Dendritic cell treated with granulocyte-macrophage colony-stimulating factor and Interleukin-4, amounts not matched to agents 40 ng/mL and 50 ng/mL, for 4 days (primary cell): ENCODE measurements at regions of chr12 and their contacts with region 1.

Region 1: GRCh38 chr12:79358716-79359300 is 332.0 kb downstream of the PAWR start:
- H3K4me3 Mint-ChIP-seq: no peak overlapping the region
- H3K27ac Mint-ChIP-seq: peak overlapping the region; percentile 24
- H3K4me1 Mint-ChIP-seq: peaks cover 10% of the 10 kb centered on the region
- H3K27me3 Mint-ChIP-seq: no peaks in the 10 kb centered on the region

Region 2: DNA sequence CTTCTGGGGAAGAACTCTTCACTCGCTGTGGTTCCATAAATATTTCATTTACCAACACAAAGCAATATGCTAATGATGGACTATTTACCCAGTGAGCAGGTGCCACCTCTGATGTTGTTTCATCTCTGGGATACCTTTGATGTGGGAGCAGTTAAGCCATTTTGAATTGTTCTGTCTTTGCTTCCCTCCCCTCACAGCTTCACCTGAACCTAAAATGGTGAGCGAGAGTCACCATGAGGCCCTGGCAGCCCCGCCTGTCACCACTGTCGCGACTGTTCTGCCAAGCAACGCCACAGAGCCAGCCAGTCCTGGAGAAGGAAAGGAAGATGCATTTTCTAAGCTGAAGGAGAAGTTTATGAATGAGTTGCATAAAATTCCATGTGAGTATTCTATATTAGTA is 141.5 kb before region 1 on chr12:
- intact Hi-C with region 1: no loop called
- H3K4me3 Mint-ChIP-seq: no peak overlapping the region
- H3K27ac Mint-ChIP-seq: no peak overlapping the region
- H3K4me1 Mint-ChIP-seq: no peaks in the 10 kb centered on the region
- H3K27me3 Mint-ChIP-seq: no peaks in the 10 kb centered on the region

Region 3: DNA sequence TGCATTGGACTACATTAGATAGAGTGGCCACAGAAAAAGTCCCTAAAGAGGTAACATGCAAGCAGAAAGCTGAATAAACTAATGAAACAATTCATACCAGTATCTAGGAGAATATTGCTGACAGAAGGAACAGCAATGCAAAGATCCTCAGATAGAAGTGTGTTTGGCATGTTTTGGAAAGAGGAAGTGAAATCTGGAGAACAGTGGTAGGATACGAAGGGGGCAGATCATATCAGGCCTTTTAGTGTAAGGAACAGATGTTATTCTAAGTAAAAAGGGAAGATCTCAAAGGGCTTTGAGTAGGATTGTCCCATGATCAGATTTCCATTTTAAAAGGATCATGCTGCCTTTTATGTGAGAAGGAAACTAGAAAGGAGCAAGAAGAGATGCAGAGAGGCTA is 10.9 kb before region 1 on chr12:
- intact Hi-C with region 1: loop called (anchors 1 kb)
- H3K4me3 Mint-ChIP-seq: no peak overlapping the region
- H3K27ac Mint-ChIP-seq: peak overlapping the region; percentile 48
- H3K4me1 Mint-ChIP-seq: peaks cover 21% of the 10 kb centered on the region
- H3K27me3 Mint-ChIP-seq: no peaks in the 10 kb centered on the region